PC-9 (cell line): ENCODE measurements at regions of chr5 and their contacts with region 1.

Region 1: GRCh38 chr5:74272024-74272775 is 368.3 kb downstream of the ENC1 start:
- DNase-seq: peak; percentile 59 to 80
- H3K4me3 ChIP-seq: no peak overlapping the region
- H3K27ac ChIP-seq: peak overlapping the region; percentile 71
- H3K4me1 ChIP-seq: peaks cover 22% of the 10 kb centered on the region
- H3K27me3 ChIP-seq: no peaks in the 10 kb centered on the region
- CTCF ChIP-seq: no peak

Region 2: DNA sequence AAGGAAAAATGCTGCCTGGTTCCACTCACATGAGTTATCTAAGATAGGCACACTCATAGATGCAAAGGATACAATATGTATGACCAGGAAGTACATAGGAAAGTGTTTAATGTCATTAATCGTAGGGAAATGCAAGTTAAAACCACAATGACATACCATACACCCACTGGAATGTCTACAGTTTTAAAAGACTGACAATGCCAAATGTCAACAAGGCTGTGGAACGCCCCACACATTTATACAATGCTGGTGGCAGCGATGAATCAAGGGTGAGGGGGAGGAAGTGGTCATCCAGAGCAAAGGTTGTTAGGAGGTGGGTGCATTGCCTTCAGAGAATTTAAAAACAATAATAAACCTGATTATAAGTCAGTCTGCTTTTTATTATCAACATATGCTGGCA is 208.4 kb before region 1 on chr5:
- CTCF ChIA-PET with region 1: no interaction called
- POLR2A ChIA-PET with region 1: no interaction called
- intact Hi-C with region 1: loop called (anchors 1 kb)
- DNase-seq: peak; percentile 70 to 98
- H3K4me3 ChIP-seq: no peak overlapping the region
- H3K27ac ChIP-seq: peak overlapping the region; percentile 79
- H3K4me1 ChIP-seq: peaks cover 52% of the 10 kb centered on the region
- H3K27me3 ChIP-seq: no peaks in the 10 kb centered on the region
- CTCF ChIP-seq: no peak

Region 3: GRCh38 chr5:74310386-74310785 is 38.2 kb after region 1 on chr5:
- CTCF ChIA-PET with region 1: interaction called, 3 read pairs
- POLR2A ChIA-PET with region 1: no interaction called
- intact Hi-C with region 1: loop called (anchors 1 kb)
- DNase-seq: peak; percentile 29 to 61
- H3K4me3 ChIP-seq: no peak overlapping the region
- H3K27ac ChIP-seq: peak overlapping the region; percentile 52
- H3K4me1 ChIP-seq: peaks cover 45% of the 10 kb centered on the region
- H3K27me3 ChIP-seq: no peaks in the 10 kb centered on the region
- CTCF ChIP-seq: no peak

Region 4: GRCh38 chr5:74326571-74327338 is 54.6 kb after region 1 on chr5:
- CTCF ChIA-PET with region 1: no interaction called
- POLR2A ChIA-PET with region 1: interaction called, 13 read pairs
- intact Hi-C with region 1: no loop called
- DNase-seq: peak; percentile 82 to 97
- H3K4me3 ChIP-seq: no peak overlapping the region
- H3K27ac ChIP-seq: peak overlapping the region; percentile 89
- H3K4me1 ChIP-seq: peaks cover 40% of the 10 kb centered on the region
- H3K27me3 ChIP-seq: no peaks in the 10 kb centered on the region
- CTCF ChIP-seq: no peak

Region 5: DNA sequence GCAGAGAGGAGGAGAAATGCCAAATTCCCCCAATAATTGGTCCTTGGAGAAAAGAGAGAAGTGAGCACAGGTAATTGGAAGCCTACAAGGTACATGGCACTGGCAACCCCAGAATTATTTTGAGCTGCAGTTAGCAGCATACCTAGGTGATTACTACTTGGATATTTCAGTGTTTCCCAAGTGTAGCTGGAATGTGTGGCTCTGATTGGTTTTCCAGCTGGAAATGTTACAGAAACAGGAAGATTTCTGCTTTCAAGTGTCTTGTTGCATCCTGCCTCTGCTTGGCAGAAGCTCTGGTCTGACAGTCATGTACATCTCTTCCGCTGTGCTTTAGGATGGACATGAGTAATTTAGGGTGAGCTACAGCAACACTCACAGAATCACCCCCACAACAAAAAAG is 106.3 kb after region 1 on chr5:
- CTCF ChIA-PET with region 1: no interaction called
- POLR2A ChIA-PET with region 1: no interaction called
- intact Hi-C with region 1: loop called (anchors 5 kb)
- DNase-seq: no peak
- H3K4me3 ChIP-seq: no peak overlapping the region
- H3K27ac ChIP-seq: no peak overlapping the region
- H3K4me1 ChIP-seq: peaks cover 34% of the 10 kb centered on the region
- H3K27me3 ChIP-seq: no peaks in the 10 kb centered on the region
- CTCF ChIP-seq: no peak